Activated CD8-positive, alpha-beta memory T cell treated with anti-CD3 and anti-CD28 coated beads, Interleukin-2, amount 10 ng/mL, durations not matched to agents 7 days and 5 days (primary cell): ENCODE measurements at regions of chr2 and their contacts with region 1.

Region 1: DNA sequence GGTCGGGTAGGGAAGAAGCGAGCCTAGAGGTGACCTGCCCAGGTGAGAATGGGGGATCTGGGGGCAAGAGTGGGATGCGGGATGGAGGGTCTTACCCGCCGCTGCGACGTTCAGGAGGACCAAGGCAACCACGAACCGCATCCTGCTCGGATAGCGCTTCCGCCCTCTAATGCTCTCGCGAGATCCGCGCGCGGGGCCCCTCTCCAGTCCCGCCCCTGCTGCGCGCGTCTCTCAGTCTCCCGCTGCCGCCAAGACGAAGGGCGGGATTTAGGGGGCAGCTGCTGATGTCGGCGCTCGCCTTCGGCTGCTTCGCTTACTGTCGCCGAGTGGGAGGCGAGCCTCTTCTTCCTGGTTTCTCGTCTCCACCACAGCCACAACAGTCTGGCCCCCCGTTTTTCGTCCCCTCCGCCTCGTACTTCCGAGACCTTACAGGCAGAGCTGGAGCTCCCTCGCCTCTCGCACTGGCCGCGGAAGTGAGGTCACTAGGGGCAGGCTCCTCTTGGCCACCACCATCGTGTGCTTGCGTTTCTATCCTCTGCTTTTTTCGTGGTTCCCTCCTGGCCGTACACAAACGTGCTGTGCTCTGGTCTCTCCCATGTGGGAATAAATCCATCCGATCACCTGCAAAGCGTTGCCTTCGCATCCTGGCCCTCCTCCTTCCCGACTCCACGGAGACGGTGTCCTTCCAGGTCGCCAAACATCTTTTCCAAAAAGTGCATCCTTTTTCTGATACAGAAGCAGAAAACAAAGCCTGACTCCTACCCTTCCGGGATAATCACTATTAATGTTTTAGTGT is at the start of gene TGOLN2:
- DNase-seq: peak; percentile 96
- ATAC-seq: peak; percentile 89
- H3K4me3 Mint-ChIP-seq: peak within 1 kb of the TSS; percentile 92
- H3K27ac Mint-ChIP-seq: peak within 1 kb of the TSS; percentile 100
- H3K4me1 Mint-ChIP-seq: peaks cover 46% of the 10 kb centered on the region
- H3K27me3 Mint-ChIP-seq: no peaks in the 10 kb centered on the region
- total RNA-seq, gene TGOLN2: 109 to 116 TPM

Region 2: GRCh38 chr2:84676295-84676694 is 651.7 kb before region 1 on chr2:
- CTCF ChIA-PET with region 1: no interaction called
- DNase-seq: no peak
- ATAC-seq: no peak
- H3K4me3 Mint-ChIP-seq: no peak overlapping the region
- H3K27ac Mint-ChIP-seq: no peak overlapping the region
- H3K4me1 Mint-ChIP-seq: peaks cover 3% of the 10 kb centered on the region
- H3K27me3 Mint-ChIP-seq: no peaks in the 10 kb centered on the region

Region 3: DNA sequence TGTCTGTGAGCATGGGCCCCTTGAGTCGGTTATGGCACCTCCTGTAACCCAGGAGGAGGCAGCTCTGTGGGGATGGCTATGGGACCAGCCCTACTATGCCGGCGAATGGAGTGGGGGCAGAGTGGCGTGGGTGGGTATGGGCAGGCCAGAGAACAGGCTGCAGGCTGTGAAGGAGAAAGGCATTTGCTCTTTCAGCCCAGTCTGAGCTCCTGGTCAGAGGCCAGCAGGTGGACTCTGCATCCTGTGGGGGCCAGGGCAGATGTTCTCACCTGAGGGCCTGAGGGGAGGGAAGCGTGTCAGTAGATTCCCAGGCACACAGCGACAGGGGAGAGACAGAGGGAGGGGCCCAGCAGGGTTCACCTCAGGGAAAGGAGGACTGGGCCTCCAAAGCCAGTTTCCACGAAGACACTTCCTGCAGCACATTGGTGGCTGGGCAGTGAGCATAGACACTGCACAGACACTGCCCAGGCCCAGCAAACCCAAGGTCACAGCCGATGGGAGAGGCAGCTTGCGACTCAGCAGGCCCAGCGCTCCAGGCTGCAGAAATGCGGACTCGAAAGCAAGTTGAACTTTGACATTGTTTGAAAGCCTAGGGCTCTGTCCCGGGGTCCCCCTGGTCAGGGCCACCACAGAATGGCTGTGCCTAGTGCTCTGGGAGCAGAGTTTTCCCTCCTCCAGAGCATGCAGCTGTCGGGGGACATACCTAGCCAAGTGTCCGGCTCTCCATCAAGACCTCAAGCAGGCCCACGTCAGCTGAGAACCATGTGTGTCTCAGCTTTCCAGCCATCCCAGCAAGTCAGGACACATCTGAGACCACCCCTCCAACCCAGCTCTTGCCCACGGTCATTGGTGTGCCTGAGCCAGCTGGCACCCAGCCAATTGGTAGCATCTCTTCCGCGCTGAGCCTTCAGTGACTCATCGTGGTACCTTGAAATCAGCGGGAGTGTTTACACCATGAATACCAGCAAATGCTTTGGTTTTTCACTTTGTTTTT is 54.0 kb before region 1 on chr2:
- CTCF ChIA-PET with region 1: no interaction called
- DNase-seq: no peak
- ATAC-seq: no peak
- H3K4me3 Mint-ChIP-seq: no peak overlapping the region
- H3K27ac Mint-ChIP-seq: no peak overlapping the region
- H3K4me1 Mint-ChIP-seq: peaks cover 2% of the 10 kb centered on the region
- H3K27me3 Mint-ChIP-seq: peaks cover 31% of the 10 kb centered on the region

Region 4: GRCh38 chr2:85302121-85302520 is 25.9 kb before region 1 on chr2:
- CTCF ChIA-PET with region 1: interaction called, 17 read pairs
- DNase-seq: no peak
- ATAC-seq: no peak
- H3K4me3 Mint-ChIP-seq: no peak overlapping the region
- H3K27ac Mint-ChIP-seq: no peak overlapping the region
- H3K4me1 Mint-ChIP-seq: peaks cover 7% of the 10 kb centered on the region
- H3K27me3 Mint-ChIP-seq: peaks cover 29% of the 10 kb centered on the region

Region 5: DNA sequence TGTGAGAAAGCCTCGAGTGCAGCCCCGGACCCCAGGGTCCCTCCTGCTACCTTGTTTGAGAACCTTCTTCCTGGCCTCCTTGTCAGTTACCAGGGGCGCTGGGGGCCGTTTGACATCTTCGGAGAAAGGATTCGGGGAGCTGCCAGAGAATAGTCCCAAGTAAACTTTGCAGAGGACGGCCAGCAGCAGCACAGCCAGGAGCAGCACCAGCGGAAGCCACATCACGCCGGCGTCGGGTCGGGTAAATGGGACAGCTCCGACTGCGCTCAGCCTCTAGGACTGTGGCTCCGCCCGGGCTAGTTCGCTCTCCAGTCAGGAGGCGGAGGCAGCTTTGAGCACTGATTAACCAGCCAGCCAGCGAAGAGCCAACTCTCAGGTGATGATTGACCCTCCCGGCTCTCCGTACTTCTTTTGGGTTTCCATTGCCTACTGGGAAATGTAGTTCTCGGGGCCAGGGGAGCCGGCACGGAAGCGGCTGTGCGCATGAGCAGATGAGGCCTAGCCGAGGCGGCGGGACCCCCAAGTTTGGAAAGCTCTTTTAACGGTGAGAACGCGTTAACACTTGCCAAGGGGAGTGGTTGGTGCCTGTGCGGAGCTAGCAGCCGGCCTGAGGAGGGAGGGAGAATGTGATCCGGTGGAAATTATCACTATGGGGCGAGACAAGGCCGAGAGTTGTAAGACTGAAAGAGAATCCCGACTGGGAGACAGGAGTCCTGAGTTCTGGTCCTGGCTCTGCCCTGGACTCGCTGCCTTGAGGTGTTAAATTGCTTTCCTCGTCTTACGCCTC is 26.5 kb after region 1 on chr2 and contains the starts of genes ELMOD3 and RETSAT:
- CTCF ChIA-PET with region 1: interaction called, 11 read pairs
- DNase-seq: peak; percentile 99
- ATAC-seq: peak; percentile 99
- H3K4me3 Mint-ChIP-seq: peak within 1 kb of the TSS; percentile 97
- H3K27ac Mint-ChIP-seq: peak within 1 kb of the TSS; percentile 93
- H3K4me1 Mint-ChIP-seq: peaks cover 44% of the 10 kb centered on the region
- H3K27me3 Mint-ChIP-seq: no peaks in the 10 kb centered on the region
- total RNA-seq, gene ELMOD3: 21.7 to 27.7 TPM
- total RNA-seq, gene RETSAT: 28.2 to 35.5 TPM